Activated naive CD4-positive, alpha-beta T cell treated with anti-CD3 and anti-CD28 coated beads for 36 hours (primary cell): ENCODE measurements at regions of chr3 and their contacts with region 1.

Region 1: DNA sequence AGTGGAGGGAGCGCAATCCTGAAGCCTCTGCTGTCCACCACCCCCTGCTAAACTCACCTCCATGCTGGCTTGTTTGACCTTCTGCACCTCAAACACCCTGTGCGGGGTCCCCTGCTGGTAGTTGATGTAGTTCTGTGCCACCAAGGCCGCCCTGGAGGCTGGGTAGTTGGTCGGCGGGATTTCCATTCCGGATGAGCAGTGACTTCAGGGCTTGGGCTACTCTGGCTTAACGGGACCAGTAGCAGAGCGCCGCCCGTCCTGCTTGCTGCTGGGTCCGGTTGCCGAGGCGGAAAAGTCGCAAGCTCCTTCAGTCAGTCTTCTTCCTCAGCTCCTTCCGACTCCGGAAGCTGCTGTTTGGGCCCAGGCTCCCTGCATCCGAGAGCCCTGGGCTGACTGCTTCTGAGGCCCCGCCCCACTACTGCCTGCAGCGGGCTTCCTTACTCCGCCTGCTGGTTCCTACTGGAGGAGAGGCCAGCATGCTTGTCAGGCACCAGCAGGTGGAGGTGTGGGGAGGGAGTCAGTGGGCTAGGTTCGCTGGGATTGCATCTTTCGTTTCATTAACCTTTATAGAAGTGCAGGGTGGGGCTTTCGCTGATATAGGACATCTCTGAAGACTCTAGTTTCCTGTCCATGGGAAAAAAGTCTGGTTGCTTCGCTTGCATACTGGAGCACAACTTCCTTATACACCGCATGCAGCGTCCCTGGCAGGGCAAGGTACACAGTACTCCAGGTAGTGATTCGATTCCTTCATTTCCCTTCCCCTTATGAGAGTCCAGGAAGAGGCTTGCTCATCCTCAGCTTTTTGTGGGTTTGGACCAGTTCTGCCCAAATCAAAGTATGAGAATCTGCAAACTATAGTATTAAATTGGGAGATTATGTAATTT is at the start of gene LXN:
- DNase-seq: peak; percentile 90
- H3K4me3 Mint-ChIP-seq: peak within 1 kb of the TSS; percentile 90
- H3K27ac Mint-ChIP-seq: peak within 1 kb of the TSS; percentile 88
- H3K4me1 Mint-ChIP-seq: peaks cover 17% of the 10 kb centered on the region
- H3K27me3 Mint-ChIP-seq: no peaks in the 10 kb centered on the region
- total RNA-seq, gene LXN: 3.7 to 4.0 TPM

Region 2: GRCh38 chr3:158659454-158660237 is 12.9 kb before region 1 on chr3:
- CTCF ChIA-PET with region 1: interaction called, 8 read pairs
- intact Hi-C with region 1: loop called (anchors 1 kb)
- DNase-seq: peak; percentile 74
- H3K4me3 Mint-ChIP-seq: no peak overlapping the region
- H3K27ac Mint-ChIP-seq: no peak overlapping the region
- H3K4me1 Mint-ChIP-seq: peaks cover 6% of the 10 kb centered on the region
- H3K27me3 Mint-ChIP-seq: no peaks in the 10 kb centered on the region

Region 3: GRCh38 chr3:158801696-158802408 is 129.3 kb after region 1 on chr3 and contains the start of gene MFSD1:
- CTCF ChIA-PET with region 1: no interaction called
- intact Hi-C with region 1: loop called (anchors 1 kb)
- DNase-seq: peak; percentile 92
- H3K4me3 Mint-ChIP-seq: peak within 1 kb of the TSS; percentile 84
- H3K27ac Mint-ChIP-seq: peak within 1 kb of the TSS; percentile 44
- H3K4me1 Mint-ChIP-seq: peaks cover 21% of the 10 kb centered on the region
- H3K27me3 Mint-ChIP-seq: no peaks in the 10 kb centered on the region
- total RNA-seq, gene MFSD1: 4.8 to 5.7 TPM